Calu3 (cell line): ENCODE measurements at regions of chr11 and their contacts with region 1.

Region 1: DNA sequence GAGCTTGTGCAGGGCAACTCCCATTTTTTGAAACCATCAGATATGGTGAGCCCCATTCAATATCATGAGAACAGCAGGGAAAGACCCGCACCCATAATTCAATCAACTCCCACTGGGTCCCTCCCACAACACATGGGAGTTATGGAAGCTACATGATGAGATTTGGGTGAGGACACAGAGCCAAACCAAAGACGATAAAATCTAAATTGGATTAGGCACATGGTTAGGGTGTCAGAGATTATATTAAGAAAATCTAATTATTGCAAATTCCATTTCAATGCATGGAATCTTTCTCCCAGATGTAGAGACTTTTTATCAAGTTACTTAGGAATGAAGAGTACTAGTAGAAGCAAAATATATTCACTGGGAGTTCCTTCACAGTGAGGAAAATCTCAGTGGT is 324.9 kb downstream of the JRKL start:
- DNase-seq: no peak
- H3K4me3 Mint-ChIP-seq: no peak overlapping the region
- H3K27ac Mint-ChIP-seq: no peak overlapping the region
- H3K4me1 Mint-ChIP-seq: no peaks in the 10 kb centered on the region
- H3K27me3 Mint-ChIP-seq: peaks cover 33% of the 10 kb centered on the region
- CTCF ChIP-seq: no peak

Region 2: DNA sequence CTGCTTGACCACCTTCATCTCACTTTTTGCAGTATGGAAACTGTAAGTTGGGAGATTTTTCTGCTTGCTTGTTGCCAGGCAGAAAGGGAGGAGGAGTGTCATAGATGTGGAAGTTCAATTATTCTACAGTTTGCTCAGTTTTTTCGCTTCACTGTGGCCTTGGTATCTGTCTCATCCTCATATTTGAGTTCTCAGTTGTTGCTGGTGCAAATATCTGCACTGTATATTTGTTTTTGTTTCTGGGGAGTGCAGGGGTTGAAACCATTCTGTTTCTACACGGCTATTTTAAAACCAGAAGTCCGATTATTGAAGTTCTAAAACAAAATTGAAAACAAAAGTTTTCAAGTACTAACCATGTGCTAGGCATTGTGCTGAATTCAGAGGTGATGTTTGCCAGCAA is 171.5 kb before region 1 on chr11:
- CTCF ChIA-PET with region 1: no interaction called
- intact Hi-C with region 1: no loop called
- DNase-seq: no peak
- H3K4me3 Mint-ChIP-seq: no peak overlapping the region
- H3K27ac Mint-ChIP-seq: no peak overlapping the region
- H3K4me1 Mint-ChIP-seq: no peaks in the 10 kb centered on the region
- H3K27me3 Mint-ChIP-seq: peaks cover 25% of the 10 kb centered on the region
- CTCF ChIP-seq: no peak

Region 3: DNA sequence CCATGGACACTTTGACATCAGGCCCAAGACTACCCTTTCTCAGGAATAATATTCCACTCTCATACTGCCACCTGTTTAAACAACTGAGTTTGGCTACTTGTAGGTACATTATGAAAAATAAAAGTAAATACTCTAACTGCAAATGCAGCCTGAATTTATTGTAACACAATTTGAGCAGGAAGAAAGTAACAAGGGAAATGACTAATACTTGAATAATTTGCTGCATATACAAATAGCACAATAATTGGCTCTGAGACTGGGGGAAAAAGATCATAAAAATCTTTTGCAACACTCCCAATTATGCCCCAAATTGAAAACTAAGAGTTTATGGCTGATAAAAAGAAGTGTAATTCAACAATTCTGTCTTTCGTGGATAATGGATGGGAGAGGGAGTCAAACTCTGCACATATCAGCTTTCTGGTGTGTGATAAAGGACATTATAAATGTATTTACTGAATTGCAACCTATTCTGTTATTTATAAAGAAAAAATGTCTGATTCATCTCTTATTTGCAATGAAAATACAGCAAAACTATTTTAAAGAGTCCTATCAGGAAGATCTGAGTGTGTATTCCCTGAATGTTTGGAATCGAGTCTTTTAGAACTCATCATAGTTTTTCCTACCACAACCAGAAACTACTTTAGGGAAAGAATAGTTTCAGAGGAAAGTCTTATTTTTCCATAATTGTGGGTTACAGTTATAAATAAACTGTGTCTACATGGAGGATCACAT is 34.1 kb after region 1 on chr11:
- CTCF ChIA-PET with region 1: no interaction called
- intact Hi-C with region 1: loop called (anchors 1 kb)
- DNase-seq: no peak
- H3K4me3 Mint-ChIP-seq: no peak overlapping the region
- H3K27ac Mint-ChIP-seq: peak overlapping the region; percentile 8
- H3K4me1 Mint-ChIP-seq: peaks cover 13% of the 10 kb centered on the region
- H3K27me3 Mint-ChIP-seq: no peaks in the 10 kb centered on the region
- CTCF ChIP-seq: no peak